KBM-7 (cell line): ENCODE measurements at regions of chr10 and their contacts with region 1.

Region 1: DNA sequence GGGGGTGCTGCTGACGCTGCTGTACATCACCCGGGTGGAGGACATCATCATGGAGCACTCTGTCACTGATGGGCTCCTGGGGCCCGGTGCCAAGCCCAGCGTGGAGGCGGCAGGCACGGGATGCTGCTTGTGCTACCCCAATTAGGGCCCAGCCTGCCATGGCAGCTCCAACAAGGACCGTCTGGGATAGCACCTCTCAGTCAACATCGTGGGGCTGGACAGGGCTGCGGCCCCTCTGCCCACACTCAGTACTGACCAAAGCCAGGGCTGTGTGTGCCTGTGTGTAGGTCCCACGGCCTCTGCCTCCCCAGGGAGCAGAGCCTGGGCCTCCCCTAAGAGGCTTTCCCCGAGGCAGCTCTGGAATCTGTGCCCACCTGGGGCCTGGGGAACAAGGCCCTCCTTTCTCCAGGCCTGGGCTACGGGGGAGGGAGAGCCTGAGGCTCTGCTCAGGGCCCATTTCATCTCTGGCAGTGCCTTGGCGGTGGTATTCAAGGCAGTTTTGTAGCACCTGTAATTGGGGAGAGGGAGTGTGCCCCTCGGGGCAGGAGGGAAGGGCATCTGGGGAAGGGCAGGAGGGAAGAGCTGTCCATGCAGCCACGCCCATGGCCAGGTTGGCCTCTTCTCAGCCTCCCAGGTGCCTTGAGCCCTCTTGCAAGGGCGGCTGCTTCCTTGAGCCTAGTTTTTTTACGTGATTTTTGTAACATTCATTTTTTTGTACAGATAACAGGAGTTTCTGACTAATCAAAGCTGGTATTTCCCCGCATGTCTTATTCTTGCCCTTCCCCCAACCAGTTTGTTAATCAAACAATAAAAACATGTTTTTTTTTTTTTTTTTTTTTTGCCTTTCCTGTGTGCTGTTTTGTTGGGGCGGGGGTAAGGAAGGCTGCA is 55.8 kb downstream of the TSPAN15 start:
- DNase-seq: peak; percentile 12

Region 2: DNA sequence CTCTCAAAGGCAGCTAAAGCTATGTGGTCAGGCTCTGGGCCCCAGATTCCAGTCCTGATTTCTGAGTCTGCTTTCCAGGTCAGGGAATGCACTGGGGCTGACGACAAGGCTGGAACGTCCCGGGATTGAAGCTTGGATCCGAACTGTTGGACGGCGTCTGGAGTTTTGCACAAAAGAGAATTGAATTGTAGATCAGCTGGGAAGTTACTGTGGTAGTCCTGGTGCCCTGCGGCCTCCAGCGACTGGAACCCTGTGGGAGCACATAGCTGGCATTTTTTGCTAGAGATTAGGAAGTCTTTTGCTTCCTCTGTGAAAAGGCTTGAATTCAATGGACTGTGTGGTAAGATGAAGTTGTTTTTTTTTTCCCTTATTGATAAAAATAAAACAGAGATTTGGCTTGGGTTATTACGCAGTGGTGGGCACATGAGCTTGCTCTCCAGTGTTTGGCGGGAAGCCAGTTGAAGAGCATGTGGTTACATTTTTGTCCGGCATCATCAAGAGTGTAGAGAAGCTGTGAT is 228.6 kb before region 1 on chr10 and contains the start of gene HK1:
- in situ Hi-C with region 1: no loop called
- DNase-seq: no peak

Region 3: DNA sequence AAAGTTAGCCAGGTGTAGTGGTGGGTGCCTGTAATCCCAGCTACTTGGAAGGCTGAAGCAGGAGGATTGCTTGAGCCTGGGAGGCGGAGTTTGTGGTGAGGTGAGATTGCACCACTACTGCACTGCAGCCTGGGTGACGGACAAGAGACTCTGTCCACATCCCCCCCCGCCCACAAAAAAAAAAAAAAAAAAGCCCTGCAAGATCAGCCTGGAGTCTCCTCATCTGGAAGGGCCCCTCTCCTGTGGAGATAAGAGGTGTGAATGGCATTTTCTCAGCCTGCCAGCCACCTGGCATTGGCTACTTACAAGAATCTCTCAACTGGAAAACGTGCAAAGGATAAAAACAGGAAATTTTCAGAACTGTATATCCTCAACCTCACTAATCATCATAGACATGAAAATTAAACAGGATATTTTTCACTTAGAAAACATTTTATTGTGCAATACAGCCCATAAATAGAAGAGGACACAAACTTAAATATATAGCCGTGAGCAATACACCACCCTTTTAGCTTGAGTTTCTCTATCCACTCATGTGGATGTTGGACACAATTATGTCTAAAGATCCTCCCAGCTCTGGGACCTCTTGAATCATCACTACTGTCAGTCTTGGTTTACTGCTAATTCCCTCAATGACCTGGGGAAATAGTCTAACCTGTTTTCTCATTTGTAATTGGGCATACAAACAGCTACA is 67.1 kb before region 1 on chr10:
- in situ Hi-C with region 1: loop called (anchors 10 kb)
- DNase-seq: peak; percentile 86

Region 4: DNA sequence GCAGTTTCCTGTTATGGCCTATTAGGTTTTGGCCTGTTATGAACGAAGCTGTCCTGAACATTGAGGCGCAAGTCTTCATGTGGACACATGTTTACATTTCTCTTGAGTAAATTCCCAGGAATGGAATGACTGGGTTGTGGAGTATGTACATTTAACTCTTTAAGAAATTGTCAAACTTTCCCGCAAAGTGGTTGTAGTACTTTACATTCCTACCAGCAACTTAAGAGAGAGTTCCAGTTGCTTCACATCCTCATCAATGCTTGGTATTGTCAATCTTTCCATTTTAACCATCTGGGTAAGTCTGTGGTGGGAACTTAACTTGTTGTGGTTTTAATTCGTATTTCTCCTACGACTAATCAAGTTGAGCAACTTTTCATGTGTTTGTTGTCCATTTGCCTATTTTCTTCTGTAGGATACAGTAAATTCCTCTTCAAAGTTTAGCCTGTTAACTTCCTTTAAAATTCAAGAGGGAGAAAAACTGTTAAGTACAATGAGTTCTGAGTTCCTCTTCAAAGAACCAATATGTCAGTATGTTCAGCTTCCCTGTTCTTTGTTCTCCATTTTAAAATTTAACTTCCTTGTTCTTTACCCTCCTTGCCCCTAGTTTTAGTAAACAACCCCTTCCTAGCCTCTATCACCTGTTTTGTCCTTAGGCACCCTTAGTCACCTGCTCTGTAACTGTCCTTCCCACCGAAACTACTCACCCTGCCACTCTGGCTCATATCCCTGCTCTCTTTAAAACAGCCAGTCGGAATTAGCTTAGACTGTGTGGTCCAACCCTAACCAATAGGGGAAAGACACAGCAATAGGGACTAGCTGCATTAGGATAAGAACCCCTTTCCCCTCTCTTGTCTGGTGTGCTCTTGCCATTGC is 196.9 kb after region 1 on chr10:
- in situ Hi-C with region 1: no loop called
- DNase-seq: peak; percentile 35

Region 5: GRCh38 chr10:69994262-69994661 is 487.2 kb after region 1 on chr10:
- in situ Hi-C with region 1: no loop called
- DNase-seq: peak; percentile 51